HCT116 (cell line): ENCODE measurements at regions of chr3 and their contacts with region 1.

Region 1: DNA sequence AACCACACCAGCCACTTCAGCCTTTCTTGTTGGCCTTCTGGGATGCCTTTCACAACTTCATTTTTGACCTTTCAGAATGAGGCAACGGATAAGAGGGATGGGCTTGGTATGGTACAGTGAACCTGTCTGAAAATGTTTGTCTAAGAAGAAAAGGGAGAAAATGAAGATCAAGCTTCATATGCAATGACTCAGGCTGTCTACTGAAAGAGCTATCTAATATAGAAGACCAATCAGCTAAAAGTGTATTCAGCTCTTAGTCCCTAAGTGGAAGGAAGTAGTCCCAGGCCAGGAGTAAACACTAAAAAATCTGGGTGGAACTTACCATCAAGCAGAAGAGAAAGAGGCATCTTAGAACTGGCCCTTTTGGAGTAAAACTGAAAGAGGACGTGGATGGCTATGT is 12.2 kb upstream of the UPK1B start:
- DNase-seq: no peak
- ATAC-seq: no peak
- H3K4me3 ChIP-seq: no peak overlapping the region
- H3K27ac ChIP-seq: no peak overlapping the region
- H3K4me1 ChIP-seq: no peaks in the 10 kb centered on the region
- H3K27me3 ChIP-seq: no peaks in the 10 kb centered on the region
- CTCF ChIP-seq: no peak
- POLR2A ChIP-seq: no peak
- RAD21 ChIP-seq: no peak

Region 2: DNA sequence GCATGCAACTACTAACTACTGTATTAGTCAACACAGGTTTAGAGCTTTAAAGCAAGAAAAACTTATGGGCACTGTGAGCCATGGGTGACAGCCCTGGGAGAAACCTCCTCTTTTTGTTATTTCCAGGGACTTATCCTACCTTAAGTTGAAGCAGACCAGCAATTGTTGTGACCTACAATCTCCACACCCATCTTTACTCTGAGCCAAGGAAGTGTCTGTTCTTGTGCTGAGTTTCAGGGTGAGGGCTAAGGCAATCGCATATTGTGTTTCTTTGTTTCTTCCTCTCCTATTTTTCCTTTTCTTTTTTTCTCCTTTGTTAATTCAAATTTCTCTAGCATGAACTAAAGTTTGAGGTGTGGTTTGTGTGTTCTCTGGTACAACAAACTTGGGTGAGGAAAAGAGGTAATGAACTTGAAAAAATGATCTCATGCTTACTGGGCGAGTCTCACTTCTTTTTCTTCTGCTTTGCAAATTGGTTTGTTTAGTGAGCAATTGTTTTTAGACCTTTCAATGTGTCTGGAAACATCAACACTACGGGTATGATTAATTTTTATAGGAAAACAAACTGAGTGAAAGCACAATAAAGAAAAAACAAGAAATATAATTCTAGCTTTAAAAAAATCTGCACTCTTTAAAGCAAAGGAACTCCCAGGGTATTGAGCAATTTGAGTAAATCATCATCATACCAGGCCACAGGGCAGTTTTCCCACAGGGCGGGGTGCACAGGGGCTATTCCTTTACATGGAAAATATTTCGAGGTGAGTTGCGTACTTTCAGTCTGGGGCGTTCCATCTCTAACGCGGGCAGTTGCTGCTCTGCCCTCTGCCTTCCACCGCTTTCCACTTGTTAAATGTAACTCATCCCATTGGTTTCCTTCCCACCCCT is 14.9 kb after region 1 on chr3:
- CTCF ChIA-PET with region 1: no interaction called
- POLR2A ChIA-PET with region 1: no interaction called
- RAD21 ChIA-PET with region 1: no interaction called
- intact Hi-C with region 1: loop called (anchors 1 kb)
- DNase-seq: no peak
- ATAC-seq: no peak
- H3K4me3 ChIP-seq: no peak overlapping the region
- H3K27ac ChIP-seq: no peak overlapping the region
- H3K4me1 ChIP-seq: no peaks in the 10 kb centered on the region
- H3K27me3 ChIP-seq: no peaks in the 10 kb centered on the region
- CTCF ChIP-seq: no peak
- POLR2A ChIP-seq: no peak
- RAD21 ChIP-seq: no peak

Region 3: DNA sequence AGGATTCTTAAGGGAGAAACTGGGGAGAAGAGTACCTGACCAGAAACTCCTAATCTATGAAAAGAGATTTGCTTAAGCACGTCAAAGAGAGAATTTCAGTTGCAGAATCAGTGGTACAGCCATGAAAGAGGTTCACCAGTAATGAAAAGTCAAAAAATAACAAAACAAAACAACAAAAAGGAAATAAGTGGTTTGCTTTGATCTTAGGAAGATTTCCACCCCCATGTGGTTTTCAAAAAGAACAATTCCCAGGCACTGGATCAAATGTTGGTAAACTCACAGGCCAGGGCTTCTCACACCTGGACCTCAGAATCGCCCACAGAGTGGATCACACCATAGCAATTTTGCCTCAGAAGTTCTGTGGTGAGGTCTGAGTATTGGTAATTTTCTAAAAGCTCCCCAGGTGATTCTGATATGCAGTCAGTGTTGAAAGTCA is 234.7 kb after region 1 on chr3:
- CTCF ChIA-PET with region 1: no interaction called
- POLR2A ChIA-PET with region 1: no interaction called
- RAD21 ChIA-PET with region 1: no interaction called
- intact Hi-C with region 1: no loop called
- DNase-seq: no peak
- ATAC-seq: no peak
- H3K4me3 ChIP-seq: no peak overlapping the region
- H3K27ac ChIP-seq: no peak overlapping the region
- H3K4me1 ChIP-seq: no peaks in the 10 kb centered on the region
- H3K27me3 ChIP-seq: no peaks in the 10 kb centered on the region
- CTCF ChIP-seq: no peak
- POLR2A ChIP-seq: no peak
- RAD21 ChIP-seq: no peak